ENCODE measurements at regions of chr9 and their contacts with region 1.

Region 1: GRCh38 chr9:100028201-100028784 is 70.5 kb downstream of the ERP44 start:
- DNase-seq: peak; percentile 81
- H3K4me3 Mint-ChIP-seq: no peak overlapping the region
- H3K27ac Mint-ChIP-seq: no peak overlapping the region
- H3K4me1 Mint-ChIP-seq: peaks cover 7% of the 10 kb centered on the region
- H3K27me3 Mint-ChIP-seq: no peaks in the 10 kb centered on the region

Region 2: GRCh38 chr9:99192786-99193465 is 835.4 kb before region 1 on chr9:
- CTCF ChIA-PET with region 1: no interaction called
- POLR2A ChIA-PET with region 1: no interaction called
- intact Hi-C with region 1: no loop called
- DNase-seq: no peak
- H3K4me3 Mint-ChIP-seq: no peak overlapping the region
- H3K27ac Mint-ChIP-seq: no peak overlapping the region
- H3K4me1 Mint-ChIP-seq: no peaks in the 10 kb centered on the region
- H3K27me3 Mint-ChIP-seq: no peaks in the 10 kb centered on the region

Region 3: DNA sequence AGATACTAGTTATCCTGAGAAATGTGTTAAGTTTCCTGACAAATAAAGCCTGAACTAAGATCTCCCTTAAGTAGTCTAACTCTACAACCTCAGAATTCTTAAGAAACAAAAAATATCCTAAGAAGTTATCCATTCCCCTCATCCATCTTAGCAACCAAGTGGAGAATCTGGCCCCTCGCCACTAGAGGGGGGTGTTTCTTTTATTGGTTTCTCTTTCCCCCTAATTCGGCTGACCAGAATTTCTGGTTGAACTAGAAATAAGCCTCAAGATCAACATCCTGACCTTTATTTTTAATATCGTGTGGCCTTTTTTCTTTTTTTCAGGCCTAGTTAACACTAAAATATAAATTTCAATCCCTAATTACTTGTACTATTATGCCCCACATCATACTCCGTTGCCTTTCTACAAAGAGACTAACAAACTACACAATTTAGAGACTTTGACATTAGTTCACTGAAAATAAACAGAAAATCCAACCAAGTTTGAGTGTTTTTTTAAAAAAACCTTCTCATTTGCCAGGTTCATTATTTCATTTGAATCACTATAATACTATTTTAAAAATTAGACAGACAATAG is 220.9 kb before region 1 on chr9:
- CTCF ChIA-PET with region 1: no interaction called
- POLR2A ChIA-PET with region 1: no interaction called
- intact Hi-C with region 1: no loop called
- DNase-seq: peak; percentile 69
- H3K4me3 Mint-ChIP-seq: no peak overlapping the region
- H3K27ac Mint-ChIP-seq: no peak overlapping the region
- H3K4me1 Mint-ChIP-seq: peaks cover 25% of the 10 kb centered on the region
- H3K27me3 Mint-ChIP-seq: peaks cover 6% of the 10 kb centered on the region

Region 4: GRCh38 chr9:100216178-100216787 is 188.0 kb after region 1 on chr9:
- CTCF ChIA-PET with region 1: interaction called, 24 read pairs
- POLR2A ChIA-PET with region 1: no interaction called
- intact Hi-C with region 1: loop called (anchors 1 kb)
- DNase-seq: peak; percentile 76
- H3K4me3 Mint-ChIP-seq: no peak overlapping the region
- H3K27ac Mint-ChIP-seq: no peak overlapping the region
- H3K4me1 Mint-ChIP-seq: peaks cover 2% of the 10 kb centered on the region
- H3K27me3 Mint-ChIP-seq: no peaks in the 10 kb centered on the region

Region 5: GRCh38 chr9:100322954-100323536 is 294.8 kb after region 1 on chr9:
- CTCF ChIA-PET with region 1: interaction called, 5 read pairs
- POLR2A ChIA-PET with region 1: no interaction called
- intact Hi-C with region 1: loop called (anchors 1 kb)
- DNase-seq: peak; percentile 24
- H3K4me3 Mint-ChIP-seq: no peak overlapping the region
- H3K27ac Mint-ChIP-seq: no peak overlapping the region
- H3K4me1 Mint-ChIP-seq: peaks cover 10% of the 10 kb centered on the region
- H3K27me3 Mint-ChIP-seq: no peaks in the 10 kb centered on the region

Region 6: GRCh38 chr9:101212661-101213060 is 1184.4 kb after region 1 on chr9:
- CTCF ChIA-PET with region 1: no interaction called
- POLR2A ChIA-PET with region 1: no interaction called
- intact Hi-C with region 1: no loop called
- DNase-seq: no peak
- H3K4me3 Mint-ChIP-seq: no peak overlapping the region
- H3K27ac Mint-ChIP-seq: no peak overlapping the region
- H3K4me1 Mint-ChIP-seq: no peaks in the 10 kb centered on the region
- H3K27me3 Mint-ChIP-seq: no peaks in the 10 kb centered on the region